T-cell (primary cell): ENCODE measurements at regions of chr2 and their contacts with region 1.

Region 1: GRCh38 chr2:235271936-235272335 is 221.9 kb upstream of the AGAP1 start:
- DNase-seq: no peak
- ATAC-seq: no peak
- H3K4me3 ChIP-seq: no peak overlapping the region
- H3K4me3 Mint-ChIP-seq: no peak overlapping the region
- H3K27ac ChIP-seq: no peak overlapping the region
- H3K27ac Mint-ChIP-seq: no peak overlapping the region
- H3K4me1 ChIP-seq: peaks cover 0 to 5% of the 10 kb centered on the region in 2 experiments
- H3K4me1 Mint-ChIP-seq: peaks cover 0 to 5% (median 4%) of the 10 kb centered on the region in 3 donors
- H3K27me3 ChIP-seq: peaks cover 0 to 19% of the 10 kb centered on the region in 2 experiments
- H3K27me3 Mint-ChIP-seq: peaks cover 47 to 49% of the 10 kb centered on the region in 2 donors

Region 2: DNA sequence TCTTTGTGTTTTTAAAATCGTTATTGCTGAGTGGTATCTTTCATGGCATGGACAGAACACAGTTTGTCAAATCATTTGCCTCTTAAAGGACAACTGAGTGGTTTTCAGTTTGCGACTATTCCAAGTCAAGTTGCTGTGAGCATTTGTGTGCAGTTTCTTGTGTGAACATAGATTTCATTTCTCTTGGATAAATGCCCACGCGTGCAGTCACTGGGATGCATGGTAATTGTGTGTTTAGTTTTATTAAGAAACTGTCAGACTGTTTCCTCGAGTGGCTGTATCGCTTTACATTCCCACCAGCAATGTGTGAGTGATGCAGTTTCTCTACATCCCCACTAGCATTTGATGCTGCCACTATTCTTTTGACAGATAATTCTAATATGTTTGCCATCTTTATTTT is 621.0 kb before region 1 on chr2:
- CTCF ChIA-PET with region 1: interaction called in 1 of 2 experiments, 11 read pairs
- POLR2A ChIA-PET with region 1: no interaction called
- DNase-seq: no peak
- ATAC-seq: no peak
- H3K4me3 ChIP-seq: no peak overlapping the region
- H3K4me3 Mint-ChIP-seq: no peak overlapping the region
- H3K27ac ChIP-seq: no peak overlapping the region
- H3K27ac Mint-ChIP-seq: no peak overlapping the region
- H3K4me1 ChIP-seq: no peaks in the 10 kb centered on the region
- H3K4me1 Mint-ChIP-seq: no peaks in the 10 kb centered on the region
- H3K27me3 ChIP-seq: peaks cover 0 to 11% of the 10 kb centered on the region in 2 experiments
- H3K27me3 Mint-ChIP-seq: peaks cover 17 to 31% of the 10 kb centered on the region in 2 donors